Activated CD4-positive, alpha-beta T cell treated with anti-CD3 and anti-CD28 coated beads, Interleukin-2, amount 10 ng/mL, durations not matched to agents 24 days and 14 days (primary cell): ENCODE measurements at regions of chr2 and their contacts with region 1.

Region 1: GRCh38 chr2:38561691-38562090 is 41.0 kb downstream of the HNRNPLL start:
- DNase-seq: no peak
- H3K4me3 Mint-ChIP-seq: no peak overlapping the region
- H3K27ac Mint-ChIP-seq: no peak overlapping the region
- H3K4me1 Mint-ChIP-seq: no peaks in the 10 kb centered on the region
- H3K27me3 Mint-ChIP-seq: no peaks in the 10 kb centered on the region

Region 2: GRCh38 chr2:38572167-38572566 is 10.5 kb after region 1 on chr2:
- intact Hi-C with region 1: loop called (anchors 1 kb)
- DNase-seq: no peak
- H3K4me3 Mint-ChIP-seq: peak overlapping the region; percentile 37
- H3K27ac Mint-ChIP-seq: peak overlapping the region; percentile 61
- H3K4me1 Mint-ChIP-seq: peaks cover 26% of the 10 kb centered on the region
- H3K27me3 Mint-ChIP-seq: no peaks in the 10 kb centered on the region

Region 3: GRCh38 chr2:38648107-38648761 is 86.5 kb after region 1 on chr2:
- intact Hi-C with region 1: no loop called
- DNase-seq: no peak
- H3K4me3 Mint-ChIP-seq: peak overlapping the region; percentile 9
- H3K27ac Mint-ChIP-seq: peak overlapping the region; percentile 77
- H3K4me1 Mint-ChIP-seq: peaks cover 45% of the 10 kb centered on the region
- H3K27me3 Mint-ChIP-seq: no peaks in the 10 kb centered on the region